A549 (cell line): ENCODE measurements at regions of chr17 and their contacts with region 1.

Region 1: GRCh38 chr17:76714822-76715495 is 4.2 kb upstream of the MXRA7 start:
- DNase-seq: peak in 1 of 2 experiments; percentile 57
- ATAC-seq: peak in 1 of 2 experiments; percentile 48; a peak in 3 of 6 replicates
- H3K4me3 ChIP-seq: no peak overlapping the region
- H3K27ac ChIP-seq: no peak overlapping the region
- H3K4me1 ChIP-seq: peaks cover 12% of the 10 kb centered on the region
- CTCF ChIP-seq: peak; percentile 97
- EP300 ChIP-seq: no peak
- POLR2A ChIP-seq: no peak
- RAD21 ChIP-seq: peak; percentile 77

Region 2: GRCh38 chr17:76511668-76512365 is 203.1 kb before region 1 on chr17:
- CTCF ChIA-PET with region 1: interaction called, 192 read pairs
- POLR2A ChIA-PET with region 1: no interaction called
- DNase-seq: no peak
- ATAC-seq: no peak
- H3K4me3 ChIP-seq: no peak overlapping the region
- H3K27ac ChIP-seq: no peak overlapping the region
- H3K4me1 ChIP-seq: no peaks in the 10 kb centered on the region
- CTCF ChIP-seq: no peak
- EP300 ChIP-seq: no peak
- POLR2A ChIP-seq: no peak
- RAD21 ChIP-seq: no peak

Region 3: DNA sequence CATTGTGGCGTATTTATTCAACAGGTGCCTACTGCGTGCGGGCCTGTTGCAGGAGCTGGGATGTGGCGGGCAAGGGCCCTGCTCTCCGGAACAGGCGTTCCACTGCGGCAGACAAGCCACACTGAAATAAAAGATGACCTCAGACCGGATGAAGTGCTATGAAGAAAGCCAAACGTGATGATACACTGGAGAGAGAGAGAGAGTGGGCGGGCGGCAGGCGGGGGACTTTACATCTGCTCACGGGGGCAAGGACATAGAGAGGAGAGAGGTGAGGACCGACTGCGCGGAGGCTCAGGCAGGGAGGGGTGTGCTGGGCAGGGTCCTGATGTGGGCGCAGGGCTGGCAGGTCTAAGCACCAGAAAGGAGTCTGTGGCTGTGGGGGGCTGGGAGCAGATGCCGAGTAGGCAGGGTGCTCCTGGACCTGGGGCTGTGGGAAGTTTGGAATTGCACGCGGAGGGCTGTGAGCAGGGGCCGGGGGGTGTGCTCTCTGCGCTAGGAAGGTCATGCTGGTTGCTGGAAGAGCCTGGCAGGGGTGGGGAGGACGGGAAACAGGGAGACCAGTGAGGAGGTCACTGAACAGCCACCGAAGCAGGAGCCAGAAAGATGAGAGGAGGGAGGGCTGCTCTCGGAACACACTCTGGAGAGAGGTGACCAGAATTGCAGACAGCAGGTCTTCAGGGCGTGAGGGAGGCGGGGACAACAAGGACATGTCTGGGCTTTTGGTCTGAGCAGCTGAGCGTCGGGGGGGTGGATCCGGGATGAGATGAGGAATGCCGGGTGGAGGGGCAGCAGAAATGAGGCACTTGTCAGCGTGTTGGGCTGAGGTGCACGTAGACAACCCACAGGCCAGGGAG is 14.1 kb before region 1 on chr17:
- CTCF ChIA-PET with region 1: interaction called, 456 read pairs
- POLR2A ChIA-PET with region 1: no interaction called
- DNase-seq: no peak
- ATAC-seq: peak; percentile 14; a peak in 3 of 6 replicates
- H3K4me3 ChIP-seq: no peak overlapping the region
- H3K27ac ChIP-seq: no peak overlapping the region
- H3K4me1 ChIP-seq: no peaks in the 10 kb centered on the region
- CTCF ChIP-seq: no peak
- EP300 ChIP-seq: no peak
- POLR2A ChIP-seq: no peak
- RAD21 ChIP-seq: no peak

Region 4: GRCh38 chr17:76726231-76726775 is 11.3 kb after region 1 on chr17 and contains the start of gene JMJD6:
- CTCF ChIA-PET with region 1: interaction called, 161 read pairs
- POLR2A ChIA-PET with region 1: interaction called, 12 read pairs
- DNase-seq: peak; percentile 98 to 99
- ATAC-seq: peak; percentile 84 to 91
- H3K4me3 ChIP-seq: peak within 1 kb of the TSS; percentile 97
- H3K27ac ChIP-seq: peak within 1 kb of the TSS; percentile 93 to 99
- H3K4me1 ChIP-seq: peaks cover 17% of the 10 kb centered on the region
- CTCF ChIP-seq: no peak
- EP300 ChIP-seq: no peak
- POLR2A ChIP-seq: peak; percentile 90
- RAD21 ChIP-seq: no peak
- polyA plus RNA-seq, gene JMJD6: 17.5 and 23.0 TPM in 2 replicates

Region 5: GRCh38 chr17:76737082-76737675 is 22.2 kb after region 1 on chr17 and contains the start of gene SRSF2:
- CTCF ChIA-PET with region 1: interaction called, 31 read pairs
- POLR2A ChIA-PET with region 1: no interaction called
- DNase-seq: peak; percentile 96 to 99
- ATAC-seq: peak; percentile 71 to 84
- H3K4me3 ChIP-seq: peak within 1 kb of the TSS; percentile 95
- H3K27ac ChIP-seq: peak within 1 kb of the TSS; percentile 97 to 98
- H3K4me1 ChIP-seq: peaks cover 37% of the 10 kb centered on the region
- CTCF ChIP-seq: no peak
- EP300 ChIP-seq: no peak; a peak in 1 of 5 replicates
- POLR2A ChIP-seq: peak; percentile 100
- RAD21 ChIP-seq: no peak
- polyA plus RNA-seq, gene SRSF2: 348 and 412 TPM in 2 replicates

Region 6: GRCh38 chr17:76862494-76862893 is 147.5 kb after region 1 on chr17:
- CTCF ChIA-PET with region 1: no interaction called
- POLR2A ChIA-PET with region 1: no interaction called
- DNase-seq: no peak
- ATAC-seq: no peak
- H3K4me3 ChIP-seq: no peak overlapping the region
- H3K27ac ChIP-seq: no peak overlapping the region
- H3K4me1 ChIP-seq: peaks cover 9% of the 10 kb centered on the region
- CTCF ChIP-seq: no peak
- EP300 ChIP-seq: no peak
- POLR2A ChIP-seq: no peak
- RAD21 ChIP-seq: no peak